ENCODE measurements at regions of chr20 and their contacts with region 1.

Region 1: DNA sequence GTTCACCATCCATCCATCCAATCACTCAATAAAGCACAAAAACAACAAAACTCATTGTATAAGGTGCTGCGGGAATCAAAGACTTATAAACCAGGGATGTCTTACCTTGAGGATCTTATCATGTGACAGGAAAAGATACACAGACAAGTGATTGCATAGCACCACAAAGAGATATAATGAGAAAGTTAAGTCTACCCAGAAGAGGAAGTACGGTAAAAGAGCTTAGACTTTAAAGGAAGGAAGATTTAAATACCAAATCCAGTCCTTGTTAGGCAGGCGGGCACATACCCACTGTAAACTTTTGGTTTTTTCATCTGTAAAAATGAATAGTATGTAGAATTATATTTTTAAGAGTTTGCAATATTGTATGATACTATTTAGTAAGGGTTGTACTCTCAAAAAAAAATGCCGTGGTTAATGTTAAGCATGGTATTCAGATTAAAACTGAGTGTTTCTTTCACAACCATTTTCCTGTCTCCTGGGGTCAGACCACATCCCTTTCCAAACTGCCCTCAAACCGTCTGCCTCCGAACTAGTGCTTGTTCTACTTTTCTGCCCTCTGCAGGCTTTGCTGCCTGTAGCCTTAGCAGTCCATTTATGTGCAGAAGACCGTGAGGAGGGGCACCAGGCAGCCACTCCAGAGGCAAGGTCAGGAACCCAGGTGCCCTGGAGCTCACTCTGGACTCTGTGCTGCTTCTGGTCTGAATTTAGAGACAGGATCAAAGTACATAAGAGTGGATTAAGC is 179.5 kb upstream of the SYNDIG1 start:
- DNase-seq: no peak
- H3K4me3 ChIP-seq: no peak overlapping the region
- H3K27ac ChIP-seq: no peak overlapping the region
- H3K4me1 ChIP-seq: no peaks in the 10 kb centered on the region
- H3K27me3 ChIP-seq: no peaks in the 10 kb centered on the region
- CTCF ChIP-seq: no peak

Region 2: GRCh38 chr20:24194137-24194536 is 95.8 kb before region 1 on chr20:
- CTCF ChIA-PET with region 1: no interaction called
- dilution Hi-C with region 1: no loop called
- in situ Hi-C with region 1: loop called in 1 of 2 experiments (anchors 25 kb)
- intact Hi-C with region 1: no loop called
- DNase-seq: no peak
- H3K4me3 ChIP-seq: no peak overlapping the region
- H3K27ac ChIP-seq: no peak overlapping the region
- H3K4me1 ChIP-seq: no peaks in the 10 kb centered on the region
- H3K27me3 ChIP-seq: peaks cover 2% of the 10 kb centered on the region
- CTCF ChIP-seq: no peak

Region 3: DNA sequence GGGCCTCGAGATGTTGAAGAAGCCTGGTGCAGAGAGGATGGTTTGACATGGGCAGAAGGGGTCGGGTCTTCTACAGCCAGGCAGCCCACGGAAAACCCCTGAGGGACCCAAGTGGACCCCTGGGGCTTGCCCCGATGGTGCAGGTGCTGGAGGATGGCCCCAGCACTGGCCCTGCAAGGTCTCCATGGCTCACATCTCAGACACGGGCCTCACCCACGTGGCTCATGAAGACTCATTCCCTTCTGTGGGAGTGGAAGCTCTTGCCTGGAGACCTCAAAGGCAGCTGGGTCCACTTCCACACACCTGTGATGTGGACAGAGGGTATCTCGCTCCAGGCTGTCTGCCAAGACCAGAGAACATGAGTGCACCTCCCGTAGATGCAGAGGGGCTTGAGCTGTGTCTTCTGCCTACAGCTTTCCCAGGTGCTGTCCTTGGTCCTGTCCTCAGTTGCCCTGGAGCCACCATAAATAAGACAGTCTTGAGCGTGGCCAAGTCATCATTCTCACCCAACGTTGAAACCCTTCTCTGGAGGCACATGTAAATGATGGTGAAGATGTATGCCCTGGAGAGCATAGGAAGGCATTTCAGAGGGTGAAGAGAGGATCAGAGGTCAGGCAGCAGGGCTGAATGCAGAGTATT is 287.5 kb after region 1 on chr20:
- CTCF ChIA-PET with region 1: no interaction called
- dilution Hi-C with region 1: no loop called
- in situ Hi-C with region 1: no loop called
- intact Hi-C with region 1: no loop called
- DNase-seq: no peak
- H3K4me3 ChIP-seq: no peak overlapping the region
- H3K27ac ChIP-seq: no peak overlapping the region
- H3K4me1 ChIP-seq: no peaks in the 10 kb centered on the region
- H3K27me3 ChIP-seq: no peaks in the 10 kb centered on the region
- CTCF ChIP-seq: no peak